PC-9 (cell line): ENCODE measurements at regions of chr1 and their contacts with region 1.

Region 1: DNA sequence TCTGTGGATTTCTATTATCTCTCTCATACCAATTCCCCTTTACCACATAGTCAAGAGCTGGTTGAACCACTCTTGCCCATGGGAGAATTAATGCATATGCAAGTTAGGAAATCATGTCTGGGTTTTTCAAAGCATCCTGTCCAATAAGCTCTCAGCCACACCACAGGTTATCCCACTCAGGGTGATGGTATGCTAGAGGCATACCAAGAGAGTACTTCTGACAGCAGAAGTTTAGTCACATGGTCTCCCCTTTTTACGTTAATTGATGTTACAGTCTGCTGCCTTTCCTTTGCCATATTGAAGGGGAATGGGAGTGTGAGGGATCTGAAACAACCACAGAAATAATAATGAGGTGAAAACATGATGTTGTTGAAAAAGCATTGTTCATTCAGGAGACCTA is 135.8 kb upstream of the PBX1 start:
- DNase-seq: no peak
- H3K4me3 ChIP-seq: no peak overlapping the region
- H3K27ac ChIP-seq: no peak overlapping the region
- H3K4me1 ChIP-seq: no peaks in the 10 kb centered on the region
- H3K27me3 ChIP-seq: no peaks in the 10 kb centered on the region
- CTCF ChIP-seq: no peak

Region 2: DNA sequence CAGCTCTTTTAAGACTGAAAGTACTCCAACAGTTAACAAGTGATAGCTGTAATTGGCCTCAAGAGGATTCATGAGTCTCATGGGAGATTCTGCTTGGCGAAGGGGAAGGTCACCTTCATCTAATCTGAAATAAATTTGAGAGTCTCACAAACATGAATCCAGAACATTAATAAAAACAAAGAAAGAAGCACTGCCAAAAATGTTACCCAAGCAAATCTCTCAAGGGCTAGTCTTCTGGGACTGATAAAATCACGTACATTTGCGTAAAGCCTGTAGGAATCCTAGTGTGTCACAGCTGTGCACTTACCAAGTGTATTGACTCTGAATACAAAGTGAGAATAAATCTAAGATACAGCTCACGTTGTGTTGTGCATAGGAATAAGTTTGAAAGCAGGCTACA is 1122.6 kb before region 1 on chr1:
- CTCF ChIA-PET with region 1: interaction called, 23 read pairs
- POLR2A ChIA-PET with region 1: no interaction called
- intact Hi-C with region 1: no loop called
- DNase-seq: no peak
- H3K4me3 ChIP-seq: no peak overlapping the region
- H3K27ac ChIP-seq: no peak overlapping the region
- H3K4me1 ChIP-seq: no peaks in the 10 kb centered on the region
- H3K27me3 ChIP-seq: no peaks in the 10 kb centered on the region
- CTCF ChIP-seq: no peak

Region 3: GRCh38 chr1:164588516-164589341 is 165.6 kb after region 1 on chr1:
- CTCF ChIA-PET with region 1: no interaction called
- POLR2A ChIA-PET with region 1: interaction called, 12 read pairs
- intact Hi-C with region 1: no loop called
- DNase-seq: no peak
- H3K4me3 ChIP-seq: no peak overlapping the region
- H3K27ac ChIP-seq: no peak overlapping the region
- H3K4me1 ChIP-seq: peaks cover 38% of the 10 kb centered on the region
- H3K27me3 ChIP-seq: no peaks in the 10 kb centered on the region
- CTCF ChIP-seq: no peak

Region 4: GRCh38 chr1:164637461-164638375 is 214.6 kb after region 1 on chr1:
- CTCF ChIA-PET with region 1: no interaction called
- POLR2A ChIA-PET with region 1: interaction called, 19 read pairs
- intact Hi-C with region 1: no loop called
- DNase-seq: peak; percentile 73 to 92
- H3K4me3 ChIP-seq: no peak overlapping the region
- H3K27ac ChIP-seq: peak overlapping the region; percentile 86
- H3K4me1 ChIP-seq: peaks cover 61% of the 10 kb centered on the region
- H3K27me3 ChIP-seq: no peaks in the 10 kb centered on the region
- CTCF ChIP-seq: no peak